Cardiac septum (tissue), 1 donor: ENCODE measurements at regions of chr17 and their contacts with region 1.

Region 1: GRCh38 chr17:48878918-48879898 is 13.4 kb upstream of the ATP5MC1 start:
- DNase-seq: no peak

Region 2: DNA sequence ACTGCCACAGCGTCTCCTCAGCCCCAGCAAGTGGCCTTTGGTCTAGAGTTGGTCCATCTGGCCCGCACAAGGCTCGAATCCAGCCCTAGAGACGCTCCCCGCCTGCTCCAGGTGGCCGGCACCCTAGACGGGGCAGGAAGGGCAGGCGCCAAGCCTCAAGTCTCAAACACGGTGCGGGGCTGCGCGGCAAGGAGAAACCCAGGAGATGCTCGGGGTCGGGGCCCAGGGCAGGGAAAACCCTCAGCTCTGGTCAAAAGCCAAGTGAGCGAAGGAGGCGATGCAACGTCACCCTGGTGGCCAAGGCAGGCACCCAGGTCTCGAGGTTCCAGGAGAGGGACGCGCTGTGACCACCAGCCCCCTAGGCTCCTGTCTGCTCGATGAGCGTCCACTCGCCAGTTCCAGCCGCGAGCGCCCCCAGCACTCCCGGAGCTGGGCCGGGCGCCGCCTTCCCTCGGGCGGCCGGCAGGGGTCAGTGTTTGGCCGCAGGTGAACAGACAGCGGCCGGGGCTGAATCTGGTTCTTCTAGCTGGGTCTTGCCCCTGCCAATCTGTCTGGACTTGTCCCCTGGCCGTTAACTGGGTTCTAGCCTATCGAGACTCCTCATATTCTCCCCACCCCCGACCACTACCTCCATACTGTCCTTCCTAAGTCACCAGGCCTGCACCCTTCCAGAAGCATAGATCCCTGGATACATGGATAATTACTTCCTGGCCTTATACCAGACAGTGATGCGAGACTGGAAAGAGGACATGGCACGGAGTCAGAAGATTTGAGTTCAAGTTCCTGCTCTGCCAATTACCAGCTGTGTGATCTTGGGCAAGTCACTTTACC is 200.9 kb before region 1 on chr17:
- intact Hi-C with region 1: loop called (anchors 5 kb)
- DNase-seq: peak; percentile 78

Region 3: DNA sequence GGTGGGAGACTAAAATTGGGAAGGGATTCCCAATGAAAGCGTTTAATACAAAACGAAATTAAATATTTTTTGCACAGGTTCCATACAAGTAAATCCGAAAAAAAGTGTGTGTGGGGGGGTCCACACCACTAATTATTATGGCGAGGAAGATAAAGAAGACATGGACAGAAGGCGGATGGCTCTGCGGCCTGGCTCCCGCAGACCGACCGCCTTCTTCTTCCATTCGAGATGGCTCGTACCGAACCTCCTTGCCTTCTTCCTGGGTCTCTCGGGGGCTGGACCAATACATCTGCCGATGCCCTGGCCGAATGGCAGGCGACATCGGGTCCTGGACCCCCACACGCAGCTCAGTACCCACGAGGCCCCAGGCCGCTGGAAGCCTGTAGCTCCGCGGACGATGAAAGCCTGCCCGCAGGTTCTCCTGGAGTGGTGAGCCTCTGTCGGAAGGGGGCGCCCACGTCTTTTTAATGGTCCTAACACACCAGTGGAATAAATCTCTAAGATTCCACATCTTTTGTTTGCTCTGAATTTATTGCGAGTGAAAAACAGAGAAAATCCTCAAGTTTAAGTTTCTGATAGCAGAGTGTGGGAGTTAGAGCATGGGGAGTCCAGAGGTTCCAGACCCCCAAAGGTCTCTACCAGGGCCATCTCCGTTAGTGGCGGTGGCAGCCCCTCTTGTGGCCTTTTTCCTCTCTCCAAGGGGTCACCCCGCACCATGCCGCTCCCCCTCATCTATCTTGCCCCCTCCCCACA is 154.8 kb before region 1 on chr17:
- intact Hi-C with region 1: loop called (anchors 5 kb)
- DNase-seq: peak; percentile 83

Region 4: DNA sequence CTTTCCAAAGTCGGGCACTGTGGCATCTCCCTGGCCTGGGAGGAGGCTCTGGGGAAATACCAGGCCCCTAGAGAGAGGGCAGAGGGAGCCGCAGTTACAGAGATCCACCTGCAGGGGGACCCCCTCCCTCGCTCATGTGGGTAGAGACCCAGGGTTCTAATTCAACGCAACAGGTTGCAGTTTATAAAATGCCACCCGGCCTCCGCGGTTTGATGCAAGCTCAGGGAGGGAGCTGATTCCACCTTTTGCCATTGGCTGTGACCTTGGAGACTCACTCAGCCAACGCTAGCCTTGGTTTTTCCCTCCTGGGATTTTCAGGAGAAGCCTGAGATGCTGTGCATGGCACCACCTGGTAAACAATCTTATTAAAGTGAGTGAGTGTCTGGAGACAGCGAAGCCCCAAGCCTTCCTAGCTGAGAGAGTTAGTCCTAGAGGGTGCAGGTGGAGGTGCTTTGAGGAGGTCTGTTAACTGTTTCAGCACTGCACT is 74.2 kb before region 1 on chr17:
- intact Hi-C with region 1: loop called (anchors 2 kb)
- DNase-seq: peak; percentile 78

Region 5: DNA sequence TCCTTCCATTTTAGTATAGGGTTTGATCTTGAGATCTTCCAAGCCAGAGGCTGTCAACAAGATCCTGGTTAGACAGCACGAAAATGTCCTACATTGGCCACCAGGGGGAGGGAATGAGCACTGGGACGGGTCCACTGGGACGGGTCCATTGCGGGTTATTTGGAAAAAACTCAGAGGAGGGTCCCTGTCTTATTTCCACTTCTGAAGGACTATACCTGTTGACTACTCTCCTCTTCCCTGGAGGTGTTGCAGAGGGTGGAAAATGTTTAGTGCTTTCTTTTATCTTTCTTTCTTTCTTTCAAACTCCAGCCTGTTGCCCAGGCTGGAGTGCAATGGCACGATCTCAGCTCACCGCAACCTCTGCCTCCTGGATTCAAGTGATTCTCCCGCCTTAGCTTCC is 64.7 kb before region 1 on chr17:
- intact Hi-C with region 1: loop called (anchors 2 kb)
- DNase-seq: peak; percentile 83